Cardiac septum (tissue), 1 donor: ENCODE measurements at regions of chr15 and their contacts with region 1.

Region 1: GRCh38 chr15:75023181-75023871 is at the start of gene PPCDC:
- DNase-seq: peak; percentile 98
- total RNA-seq, gene PPCDC: 7.2 TPM

Region 2: GRCh38 chr15:74964794-74965193 is 58.5 kb before region 1 on chr15:
- intact Hi-C with region 1: loop called (anchors 5 kb)
- DNase-seq: no peak

Region 3: DNA sequence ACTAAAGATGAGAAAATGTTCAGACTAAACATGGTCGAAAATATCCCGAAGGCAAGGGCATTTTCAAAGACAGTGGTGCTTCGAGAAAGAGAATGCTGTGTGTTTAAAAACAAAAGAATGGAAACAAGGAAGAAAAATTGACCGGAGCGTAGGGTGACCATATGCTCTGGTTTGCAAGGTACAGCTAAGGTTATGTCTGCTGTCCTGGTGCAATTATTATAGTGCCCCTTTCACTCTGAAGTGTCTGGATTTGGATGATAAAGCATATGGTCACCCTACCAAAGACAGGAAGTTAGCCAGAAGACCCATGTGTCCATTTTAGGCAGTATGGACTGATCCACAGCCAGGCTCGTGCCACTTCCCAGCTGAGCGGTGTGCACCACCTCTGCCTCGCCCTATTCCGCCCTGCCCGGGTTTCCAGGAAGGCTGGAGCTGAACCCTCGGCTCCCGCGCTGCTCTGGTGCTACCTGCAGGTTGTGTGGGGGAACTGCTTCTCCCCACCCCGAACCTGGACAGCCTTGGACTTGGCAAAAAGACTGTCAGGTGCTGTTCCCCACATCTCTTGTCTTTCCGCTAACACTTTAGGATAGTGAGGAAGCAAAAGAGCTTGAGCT is 284.6 kb after region 1 on chr15:
- intact Hi-C with region 1: loop called (anchors 10 kb)
- DNase-seq: no peak